ENCODE measurements at regions of chr11 and their contacts with region 1.

Region 1: GRCh38 chr11:250740-251299 is 14.0 kb downstream of the PSMD13 start:
- DNase-seq: peak; percentile 90
- ATAC-seq: peak; percentile 97
- H3K4me3 Mint-ChIP-seq: peak overlapping the region; percentile 29
- H3K27ac Mint-ChIP-seq: peak overlapping the region; percentile 79
- H3K4me1 Mint-ChIP-seq: peaks cover 21% of the 10 kb centered on the region
- H3K27me3 Mint-ChIP-seq: peaks cover 2% of the 10 kb centered on the region

Region 2: GRCh38 chr11:215581-216037 is 35.2 kb before region 1 on chr11:
- CTCF ChIA-PET with region 1: interaction called, 15 read pairs
- POLR2A ChIA-PET with region 1: interaction called, 3 read pairs
- DNase-seq: no peak
- ATAC-seq: no peak
- H3K4me3 Mint-ChIP-seq: no peak overlapping the region
- H3K27ac Mint-ChIP-seq: no peak overlapping the region
- H3K4me1 Mint-ChIP-seq: peaks cover 9% of the 10 kb centered on the region
- H3K27me3 Mint-ChIP-seq: no peaks in the 10 kb centered on the region

Region 3: GRCh38 chr11:269146-269890 is 18.5 kb after region 1 on chr11:
- CTCF ChIA-PET with region 1: interaction called, 61 read pairs
- POLR2A ChIA-PET with region 1: interaction called, 19 read pairs
- DNase-seq: peak; percentile 69
- ATAC-seq: peak; percentile 47
- H3K4me3 Mint-ChIP-seq: peak overlapping the region; percentile 75
- H3K27ac Mint-ChIP-seq: peak overlapping the region; percentile 92
- H3K4me1 Mint-ChIP-seq: peaks cover 35% of the 10 kb centered on the region
- H3K27me3 Mint-ChIP-seq: peaks cover 2% of the 10 kb centered on the region

Region 4: GRCh38 chr11:293847-294661 is 43.2 kb after region 1 on chr11:
- CTCF ChIA-PET with region 1: interaction called, 76 read pairs
- POLR2A ChIA-PET with region 1: interaction called, 20 read pairs
- DNase-seq: no peak
- ATAC-seq: no peak
- H3K4me3 Mint-ChIP-seq: peak overlapping the region; percentile 88
- H3K27ac Mint-ChIP-seq: peak overlapping the region; percentile 81
- H3K4me1 Mint-ChIP-seq: peaks cover 82% of the 10 kb centered on the region
- H3K27me3 Mint-ChIP-seq: no peaks in the 10 kb centered on the region

Region 5: GRCh38 chr11:313787-314547 is 63.1 kb after region 1 on chr11 and contains the start of gene IFITM1:
- CTCF ChIA-PET with region 1: interaction called, 12 read pairs
- POLR2A ChIA-PET with region 1: interaction called, 9 read pairs
- DNase-seq: peak; percentile 90
- ATAC-seq: peak; percentile 45
- H3K4me3 Mint-ChIP-seq: peak within 1 kb of the TSS; percentile 87
- H3K27ac Mint-ChIP-seq: peak within 1 kb of the TSS; percentile 99
- H3K4me1 Mint-ChIP-seq: peaks cover 13% of the 10 kb centered on the region
- H3K27me3 Mint-ChIP-seq: no peaks in the 10 kb centered on the region
- total RNA-seq, gene IFITM1: 1,265 to 1,278 TPM

Region 6: DNA sequence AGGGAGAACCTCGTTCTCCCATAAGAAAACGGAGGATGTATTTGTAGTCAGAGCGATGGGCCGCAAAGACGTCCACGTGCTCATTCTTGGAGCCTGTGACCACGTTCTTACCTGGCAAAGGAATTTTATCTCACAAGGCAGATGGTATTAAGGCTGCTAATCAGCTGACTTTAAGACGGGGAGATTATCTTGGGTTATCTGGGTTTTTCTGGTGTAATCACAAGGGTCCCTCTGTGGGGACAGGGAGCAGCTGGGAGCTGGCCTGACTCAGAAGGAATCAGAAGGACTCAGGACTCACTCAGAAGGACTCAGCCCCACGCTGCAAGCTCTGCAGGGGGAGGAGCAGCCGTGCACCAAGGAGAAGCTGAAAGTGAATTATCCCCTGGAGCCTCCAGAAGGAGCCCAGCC is 171.4 kb after region 1 on chr11:
- CTCF ChIA-PET with region 1: no interaction called
- POLR2A ChIA-PET with region 1: no interaction called
- DNase-seq: no peak
- ATAC-seq: no peak
- H3K4me3 Mint-ChIP-seq: no peak overlapping the region
- H3K27ac Mint-ChIP-seq: peak overlapping the region; percentile 21
- H3K4me1 Mint-ChIP-seq: peaks cover 7% of the 10 kb centered on the region
- H3K27me3 Mint-ChIP-seq: no peaks in the 10 kb centered on the region

Region 7: GRCh38 chr11:447923-448731 is 197.3 kb after region 1 on chr11:
- CTCF ChIA-PET with region 1: interaction called, 35 read pairs
- POLR2A ChIA-PET with region 1: interaction called, 3 read pairs
- DNase-seq: peak; percentile 97
- ATAC-seq: peak; percentile 77
- H3K4me3 Mint-ChIP-seq: peak overlapping the region; percentile 83
- H3K27ac Mint-ChIP-seq: peak overlapping the region; percentile 97
- H3K4me1 Mint-ChIP-seq: peaks cover 28% of the 10 kb centered on the region
- H3K27me3 Mint-ChIP-seq: peaks cover 8% of the 10 kb centered on the region

Region 8: DNA sequence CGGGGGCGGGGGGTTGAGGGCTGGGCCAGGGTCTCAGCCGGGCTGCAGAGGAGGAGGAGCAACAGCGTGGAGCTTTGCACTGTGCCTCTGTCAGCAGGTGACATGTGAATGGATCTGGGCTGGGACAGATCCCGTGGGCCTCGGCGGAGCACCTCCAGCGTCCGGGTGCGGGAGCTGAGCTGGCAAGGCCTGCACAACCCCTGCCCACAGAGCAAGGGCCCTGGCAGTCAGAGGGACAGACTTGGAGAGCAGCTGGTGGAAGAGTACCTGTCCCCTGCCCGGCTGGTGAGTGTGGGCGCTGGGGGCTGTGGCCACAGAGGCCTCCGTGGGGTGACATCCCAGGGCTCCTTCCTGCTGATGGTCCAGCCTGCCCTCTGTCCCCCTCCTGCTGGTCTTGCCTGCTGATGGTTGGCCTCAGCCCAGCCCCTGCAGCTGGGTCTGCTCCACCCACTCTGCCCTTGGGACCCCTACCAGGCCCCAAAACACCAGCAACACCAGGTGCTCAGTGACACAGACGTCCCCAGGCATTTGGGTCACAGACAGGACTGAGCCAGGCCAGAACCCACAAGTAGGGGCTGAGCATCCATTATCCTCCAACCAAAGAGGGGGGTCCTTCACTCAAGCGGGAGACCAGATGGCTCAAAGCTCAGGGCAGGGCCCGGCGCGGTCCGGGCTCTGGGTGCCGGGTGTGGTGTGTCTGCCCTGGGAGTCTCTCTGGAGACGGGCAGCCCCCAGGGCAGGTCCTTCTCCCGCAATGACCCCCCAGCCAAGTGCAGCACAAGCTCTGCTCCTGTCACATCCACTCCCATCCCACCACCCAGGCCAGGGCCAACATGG is 290.0 kb after region 1 on chr11:
- CTCF ChIA-PET with region 1: no interaction called
- POLR2A ChIA-PET with region 1: no interaction called
- DNase-seq: no peak
- ATAC-seq: no peak
- H3K4me3 Mint-ChIP-seq: no peak overlapping the region
- H3K27ac Mint-ChIP-seq: no peak overlapping the region
- H3K4me1 Mint-ChIP-seq: peaks cover 20% of the 10 kb centered on the region
- H3K27me3 Mint-ChIP-seq: no peaks in the 10 kb centered on the region

Region 9: GRCh38 chr11:952406-953385 is 701.9 kb after region 1 on chr11:
- CTCF ChIA-PET with region 1: no interaction called
- POLR2A ChIA-PET with region 1: no interaction called
- DNase-seq: no peak
- ATAC-seq: no peak
- H3K4me3 Mint-ChIP-seq: no peak overlapping the region
- H3K27ac Mint-ChIP-seq: no peak overlapping the region
- H3K4me1 Mint-ChIP-seq: peaks cover 3% of the 10 kb centered on the region
- H3K27me3 Mint-ChIP-seq: no peaks in the 10 kb centered on the region